Activated T-helper 1 cell treated with anti-CD3 and anti-CD28 coated beads, Interleukin-12 subunit alpha, Interleukin-12 subunit beta, Interleukin-2, Interleukin-4 antibody, amounts not matched to agents 30 ng/mL and 10 ng/mL and 1 ng/mL, durations not matched to agents 14 hours and 24 hours and 36 hours (primary cell): ENCODE measurements at regions of chr2 and their contacts with region 1.

Region 1: GRCh38 chr2:106085181-106085940 is 108.7 kb downstream of the UXS1 start:
- DNase-seq: peak; percentile 41
- H3K4me3 Mint-ChIP-seq: peak overlapping the region; percentile 38
- H3K27ac Mint-ChIP-seq: peak overlapping the region; percentile 76
- H3K4me1 Mint-ChIP-seq: peaks cover 18% of the 10 kb centered on the region
- H3K27me3 Mint-ChIP-seq: no peaks in the 10 kb centered on the region

Region 2: GRCh38 chr2:105652014-105652796 is 433.2 kb before region 1 on chr2:
- intact Hi-C with region 1: loop called (anchors 5 kb)
- DNase-seq: no peak
- H3K4me3 Mint-ChIP-seq: no peak overlapping the region
- H3K27ac Mint-ChIP-seq: no peak overlapping the region
- H3K4me1 Mint-ChIP-seq: no peaks in the 10 kb centered on the region
- H3K27me3 Mint-ChIP-seq: peaks cover 5% of the 10 kb centered on the region

Region 3: DNA sequence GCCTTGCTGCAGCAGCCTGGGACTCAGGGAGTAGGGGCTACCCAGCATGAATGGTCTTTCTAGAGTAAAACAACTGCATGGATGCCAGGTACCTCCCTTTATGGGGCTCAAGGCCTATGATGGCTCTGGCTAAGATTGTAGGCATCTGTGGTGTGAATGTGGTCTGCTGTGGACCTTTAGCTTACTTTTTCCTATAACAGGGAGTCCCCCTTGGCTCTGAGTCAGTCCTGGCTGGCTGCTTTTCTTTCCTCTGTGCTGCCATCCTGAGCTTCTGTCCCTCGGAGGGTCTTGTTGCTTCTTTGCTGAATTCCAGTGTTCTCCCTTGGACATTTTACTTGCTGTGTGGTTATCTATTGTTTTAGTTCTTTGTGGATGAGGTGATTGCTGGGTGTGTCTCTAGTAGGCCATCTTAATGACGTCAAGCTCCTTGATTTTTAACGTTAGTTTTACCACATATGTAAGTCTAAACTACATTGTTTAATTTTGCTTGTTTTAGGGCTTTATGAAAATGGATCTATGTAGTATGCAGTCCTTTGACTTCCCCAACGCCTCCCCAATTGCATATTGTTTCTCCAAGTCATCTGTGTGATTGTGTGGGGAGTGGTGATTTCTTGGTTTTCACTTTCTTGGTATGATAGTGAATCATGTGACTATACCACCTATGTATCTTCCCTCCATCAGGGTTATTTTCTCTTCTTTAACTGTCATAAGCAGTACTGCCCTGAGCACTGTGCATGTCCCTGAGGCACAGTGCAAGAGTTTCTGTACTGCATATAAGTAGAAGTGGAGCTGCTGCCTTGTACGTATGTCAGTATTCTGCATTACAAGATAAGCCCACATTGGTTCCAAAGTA is 248.3 kb before region 1 on chr2:
- intact Hi-C with region 1: loop called (anchors 1 kb)
- DNase-seq: no peak
- H3K4me3 Mint-ChIP-seq: peak overlapping the region; percentile 44
- H3K27ac Mint-ChIP-seq: peak overlapping the region; percentile 61
- H3K4me1 Mint-ChIP-seq: peaks cover 89% of the 10 kb centered on the region
- H3K27me3 Mint-ChIP-seq: no peaks in the 10 kb centered on the region

Region 4: GRCh38 chr2:105934467-105934866 is 150.9 kb before region 1 on chr2:
- intact Hi-C with region 1: loop called (anchors 2 kb)
- DNase-seq: peak; percentile 41
- H3K4me3 Mint-ChIP-seq: peak overlapping the region; percentile 22
- H3K27ac Mint-ChIP-seq: peak overlapping the region; percentile 19
- H3K4me1 Mint-ChIP-seq: peaks cover 13% of the 10 kb centered on the region
- H3K27me3 Mint-ChIP-seq: no peaks in the 10 kb centered on the region

Region 5: DNA sequence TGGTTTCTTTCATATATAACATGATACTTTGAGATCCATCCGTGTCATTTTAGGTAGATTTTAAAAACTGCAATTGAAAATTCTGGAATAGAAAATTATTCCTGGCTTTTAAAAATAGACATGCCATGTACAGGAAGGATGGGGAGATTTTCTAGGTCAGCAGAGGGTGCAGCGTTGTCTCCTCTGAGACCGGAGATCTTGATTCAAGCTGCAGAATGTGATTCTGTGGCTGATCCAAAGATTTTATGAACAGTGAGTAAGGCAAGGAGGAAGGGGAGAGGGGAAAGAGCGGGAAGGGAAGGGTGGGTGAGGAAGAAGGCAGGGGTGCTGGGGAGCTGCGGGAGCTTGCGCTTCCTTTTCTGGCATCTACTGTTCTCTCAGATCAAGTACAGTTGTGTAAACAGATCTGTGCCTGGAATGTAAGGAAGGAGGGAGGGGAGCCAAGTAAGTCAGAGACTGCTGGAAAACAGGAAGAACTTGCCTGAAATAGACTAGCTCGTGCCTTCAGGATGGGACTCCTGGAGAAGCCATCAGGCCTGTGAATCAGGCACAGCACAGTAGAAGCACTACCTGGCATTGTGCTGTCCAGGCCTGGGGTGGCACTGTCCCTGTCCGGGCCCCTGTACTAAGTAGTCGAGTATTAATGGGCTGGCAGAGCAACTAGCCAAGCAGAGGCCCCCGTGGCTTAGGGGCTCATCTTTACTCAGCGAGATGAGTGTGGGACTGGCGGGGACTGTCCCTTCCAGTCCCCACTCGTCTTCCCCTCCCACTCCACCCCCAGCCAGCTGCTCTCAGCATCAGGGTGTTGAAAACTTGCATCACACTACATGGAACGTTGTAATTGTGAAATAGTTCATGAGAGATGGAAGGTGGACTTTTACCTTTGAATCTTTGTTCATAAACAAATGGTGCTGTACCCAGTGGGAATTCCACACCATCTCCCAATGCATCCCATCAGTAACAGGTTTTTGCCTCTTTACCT is 54.8 kb before region 1 on chr2:
- intact Hi-C with region 1: loop called (anchors 5 kb)
- DNase-seq: no peak
- H3K4me3 Mint-ChIP-seq: no peak overlapping the region
- H3K27ac Mint-ChIP-seq: no peak overlapping the region
- H3K4me1 Mint-ChIP-seq: peaks cover 7% of the 10 kb centered on the region
- H3K27me3 Mint-ChIP-seq: no peaks in the 10 kb centered on the region

Region 6: DNA sequence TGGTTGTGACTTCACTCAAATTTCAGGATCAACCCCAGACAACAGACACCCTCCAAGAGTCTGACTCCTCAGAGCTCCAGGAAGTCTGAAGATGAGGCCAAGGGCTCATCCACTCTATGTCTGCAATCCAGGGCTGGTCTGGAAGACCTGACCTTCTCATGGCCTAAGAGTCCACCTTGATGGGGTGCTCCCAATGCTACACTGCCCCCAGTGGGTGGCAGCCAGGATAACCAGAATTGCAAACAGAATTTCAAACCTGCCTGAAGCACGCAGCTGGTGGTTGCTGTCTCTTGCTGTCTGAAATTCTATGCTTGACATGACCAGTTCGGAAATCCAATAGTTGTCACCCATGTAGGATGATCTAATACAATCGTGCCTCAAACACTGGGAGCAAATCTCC is 12.7 kb after region 1 on chr2:
- intact Hi-C with region 1: loop called (anchors 1 kb)
- DNase-seq: no peak
- H3K4me3 Mint-ChIP-seq: no peak overlapping the region
- H3K27ac Mint-ChIP-seq: no peak overlapping the region
- H3K4me1 Mint-ChIP-seq: peaks cover 31% of the 10 kb centered on the region
- H3K27me3 Mint-ChIP-seq: no peaks in the 10 kb centered on the region